Caco-2 (cell line): ENCODE measurements at regions of chr5 and their contacts with region 1.

Region 1: DNA sequence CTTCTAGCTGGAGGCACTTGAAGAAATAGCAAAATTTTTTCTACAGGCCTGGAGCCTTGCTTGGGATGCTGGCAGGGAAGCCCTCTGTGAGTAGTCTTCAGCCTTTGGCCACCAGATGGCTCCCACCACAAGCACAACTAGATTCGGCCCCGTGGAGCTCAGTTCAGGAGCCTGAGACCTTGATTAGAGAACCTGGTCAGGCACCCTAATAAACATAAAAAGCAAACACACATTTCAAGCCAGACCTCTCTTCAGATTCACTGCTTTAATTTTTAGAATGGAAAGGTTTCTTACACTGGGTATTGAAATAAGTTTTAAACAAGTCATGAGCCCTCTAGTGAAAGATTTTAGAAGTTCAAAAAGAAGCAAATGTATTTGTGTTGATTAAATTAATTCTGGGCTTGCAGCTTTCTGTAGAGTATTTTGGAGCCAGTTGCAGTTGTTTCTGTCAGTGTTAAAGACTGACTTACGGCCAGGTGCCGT is 41.4 kb downstream of the GLRX start:
- DNase-seq: peak; percentile 82 to 84
- H3K4me3 ChIP-seq: no peak overlapping the region
- H3K4me3 Mint-ChIP-seq: no peak overlapping the region
- H3K27ac Mint-ChIP-seq: no peak overlapping the region
- H3K4me1 ChIP-seq: no peaks in the 10 kb centered on the region
- H3K4me1 Mint-ChIP-seq: no peaks in the 10 kb centered on the region
- H3K27me3 ChIP-seq: no peaks in the 10 kb centered on the region
- H3K27me3 Mint-ChIP-seq: no peaks in the 10 kb centered on the region
- CTCF ChIP-seq: peak; percentile 89 to 95

Region 2: GRCh38 chr5:93874080-93874479 is 1907.1 kb before region 1 on chr5:
- CTCF ChIA-PET with region 1: no interaction called
- POLR2A ChIA-PET with region 1: no interaction called
- intact Hi-C with region 1: no loop called
- DNase-seq: no peak
- H3K4me3 ChIP-seq: no peak overlapping the region
- H3K4me3 Mint-ChIP-seq: no peak overlapping the region
- H3K27ac Mint-ChIP-seq: no peak overlapping the region
- H3K4me1 ChIP-seq: no peaks in the 10 kb centered on the region
- H3K4me1 Mint-ChIP-seq: no peaks in the 10 kb centered on the region
- H3K27me3 ChIP-seq: no peaks in the 10 kb centered on the region
- H3K27me3 Mint-ChIP-seq: no peaks in the 10 kb centered on the region
- CTCF ChIP-seq: no peak

Region 3: DNA sequence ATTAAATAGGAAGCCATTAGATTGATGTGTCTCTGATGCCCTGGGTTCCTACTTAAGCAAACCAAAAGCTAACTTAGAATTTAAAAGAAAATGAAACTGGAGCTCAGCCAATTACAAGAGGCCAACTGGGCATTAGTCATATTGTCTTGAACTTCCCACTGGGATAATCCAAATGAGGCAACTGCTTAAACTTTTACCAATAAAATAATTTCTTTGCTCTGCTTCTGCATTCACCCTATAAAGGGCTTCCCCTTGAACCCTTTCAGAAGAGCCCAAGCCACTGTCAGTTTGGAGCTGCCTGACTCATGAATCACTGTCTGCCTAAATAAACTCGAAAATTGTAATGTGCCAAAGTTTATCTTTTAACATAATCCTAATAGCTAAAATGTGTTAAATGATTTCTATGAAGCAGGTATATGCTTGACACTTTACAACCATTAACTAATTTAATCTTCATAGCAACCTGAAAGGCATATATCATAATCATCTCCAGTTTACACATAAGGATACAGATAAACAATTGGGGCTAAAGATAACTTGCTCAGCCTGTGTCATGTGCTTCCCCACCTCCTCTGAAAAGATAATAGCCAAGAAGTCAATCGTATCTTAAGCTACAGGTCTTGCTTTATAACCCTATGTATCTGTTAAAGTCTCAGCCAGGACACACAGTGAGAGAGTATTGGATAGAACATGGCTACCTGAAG is 149.7 kb before region 1 on chr5:
- CTCF ChIA-PET with region 1: no interaction called
- POLR2A ChIA-PET with region 1: no interaction called
- intact Hi-C with region 1: no loop called
- DNase-seq: no peak
- H3K4me3 ChIP-seq: no peak overlapping the region
- H3K4me3 Mint-ChIP-seq: no peak overlapping the region
- H3K27ac Mint-ChIP-seq: no peak overlapping the region
- H3K4me1 ChIP-seq: peaks cover 4% of the 10 kb centered on the region; the same call in 1 of the 2 replicates
- H3K4me1 Mint-ChIP-seq: peaks cover 11% of the 10 kb centered on the region
- H3K27me3 ChIP-seq: no peaks in the 10 kb centered on the region
- H3K27me3 Mint-ChIP-seq: no peaks in the 10 kb centered on the region
- CTCF ChIP-seq: no peak

Region 4: GRCh38 chr5:95646554-95647431 is 134.3 kb before region 1 on chr5 and contains the start of gene RFESD:
- CTCF ChIA-PET with region 1: interaction called, 22 read pairs
- POLR2A ChIA-PET with region 1: no interaction called
- intact Hi-C with region 1: loop called (anchors 1 kb)
- DNase-seq: peak; percentile 99
- H3K4me3 ChIP-seq: peak within 1 kb of the TSS; percentile 27
- H3K4me3 Mint-ChIP-seq: peak within 1 kb of the TSS; percentile 82
- H3K27ac Mint-ChIP-seq: peak within 1 kb of the TSS; percentile 89
- H3K4me1 ChIP-seq: peaks cover 8% of the 10 kb centered on the region; the same call in 1 of the 2 replicates
- H3K4me1 Mint-ChIP-seq: peaks cover 7% of the 10 kb centered on the region
- H3K27me3 ChIP-seq: no peaks in the 10 kb centered on the region
- H3K27me3 Mint-ChIP-seq: no peaks in the 10 kb centered on the region
- CTCF ChIP-seq: peak; percentile 12 to 45
- total RNA-seq, gene RFESD: 1.6 and 2.4 TPM in 2 replicates

Region 5: DNA sequence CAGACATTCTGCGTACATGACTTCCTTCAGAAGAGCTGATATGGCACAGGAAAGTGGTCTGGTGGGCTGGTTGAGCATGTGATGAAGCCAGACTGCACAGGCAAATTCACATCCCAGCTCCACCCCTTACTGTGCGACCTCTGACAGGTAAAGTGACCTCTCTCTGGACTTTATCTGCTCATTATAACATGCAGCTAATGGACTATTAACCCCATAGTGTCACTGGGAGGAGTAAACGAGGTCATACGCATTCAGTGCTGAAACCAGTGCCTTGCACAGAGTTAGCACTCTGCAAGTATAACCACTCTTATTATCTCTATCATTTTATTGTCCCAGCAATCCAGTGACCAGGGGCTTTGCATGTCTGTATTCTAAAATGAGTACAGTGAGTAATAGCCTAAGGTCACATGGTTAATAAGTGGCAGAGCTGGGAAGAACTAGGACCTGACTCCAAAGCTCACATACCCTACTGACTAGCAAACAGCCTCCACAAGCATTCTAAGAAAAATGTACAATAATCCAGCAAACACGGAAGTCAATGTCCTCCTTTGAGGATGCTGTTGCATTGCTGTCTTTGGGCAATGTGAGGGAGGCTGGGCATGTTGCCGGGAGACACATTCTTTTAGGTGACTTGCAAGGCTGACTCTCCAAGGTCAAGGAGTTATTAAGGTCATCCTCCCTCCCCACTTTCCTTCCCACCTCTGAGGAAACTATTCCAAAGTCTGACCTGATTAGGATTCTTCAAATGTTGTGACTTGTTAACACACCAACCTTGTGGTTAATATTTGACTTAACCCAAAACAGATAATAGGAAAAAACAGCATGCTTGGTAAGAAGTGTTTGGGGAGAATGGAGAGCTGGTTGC is 22.4 kb after region 1 on chr5:
- CTCF ChIA-PET with region 1: interaction called, 6 read pairs
- POLR2A ChIA-PET with region 1: no interaction called
- intact Hi-C with region 1: loop called (anchors 1 kb)
- DNase-seq: peak; percentile 72 to 86
- H3K4me3 ChIP-seq: no peak overlapping the region
- H3K4me3 Mint-ChIP-seq: peak overlapping the region; percentile 18
- H3K27ac Mint-ChIP-seq: peak overlapping the region; percentile 42
- H3K4me1 ChIP-seq: peaks cover 33% of the 10 kb centered on the region
- H3K4me1 Mint-ChIP-seq: peaks cover 20% of the 10 kb centered on the region
- H3K27me3 ChIP-seq: no peaks in the 10 kb centered on the region
- H3K27me3 Mint-ChIP-seq: no peaks in the 10 kb centered on the region
- CTCF ChIP-seq: no peak

Region 6: DNA sequence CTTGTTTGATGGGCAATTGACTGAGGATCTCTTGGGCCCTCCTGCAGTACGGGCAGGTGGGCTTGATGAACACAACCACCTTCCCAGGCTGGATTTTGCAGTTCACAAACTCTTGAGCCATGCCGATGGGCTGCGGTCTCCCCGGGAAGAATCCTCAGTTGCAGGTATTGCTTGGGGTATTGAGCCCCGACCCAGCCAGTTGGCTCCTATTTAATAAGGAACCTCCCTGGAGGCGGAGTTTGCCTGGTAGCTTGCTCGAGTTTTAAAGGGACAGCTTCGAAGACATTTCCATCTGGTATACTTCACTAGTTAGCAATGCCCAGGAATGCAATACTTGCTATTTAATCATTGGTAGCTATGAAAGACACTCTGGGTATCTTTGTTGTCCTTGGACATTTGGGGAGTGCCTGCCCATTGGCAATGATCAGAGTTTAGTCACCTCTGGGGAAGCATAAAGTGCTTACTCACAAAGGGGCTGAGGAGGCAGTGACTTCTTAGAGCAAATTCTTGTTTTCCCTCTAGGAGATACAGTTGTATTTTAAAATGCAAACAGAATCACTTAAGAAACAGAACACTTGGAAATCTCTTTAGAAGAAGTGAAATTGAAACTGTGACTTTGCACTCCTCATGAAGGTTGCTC is 41.5 kb after region 1 on chr5 and contains the start of gene GLRX:
- CTCF ChIA-PET with region 1: interaction called, 10 read pairs
- POLR2A ChIA-PET with region 1: interaction called, 3 read pairs
- intact Hi-C with region 1: loop called (anchors 1 kb)
- DNase-seq: peak; percentile 69 to 70
- H3K4me3 ChIP-seq: peak within 1 kb of the TSS; percentile 59
- H3K4me3 Mint-ChIP-seq: peak within 1 kb of the TSS; percentile 82
- H3K27ac Mint-ChIP-seq: peak within 1 kb of the TSS; percentile 63
- H3K4me1 ChIP-seq: peaks cover 34% of the 10 kb centered on the region
- H3K4me1 Mint-ChIP-seq: peaks cover 21% of the 10 kb centered on the region
- H3K27me3 ChIP-seq: no peaks in the 10 kb centered on the region
- H3K27me3 Mint-ChIP-seq: no peaks in the 10 kb centered on the region
- CTCF ChIP-seq: no peak
- total RNA-seq, gene GLRX: 17.9 and 26.4 TPM in 2 replicates

Region 7: GRCh38 chr5:95846554-95847260 is 65.6 kb after region 1 on chr5:
- CTCF ChIA-PET with region 1: interaction called, 35 read pairs
- POLR2A ChIA-PET with region 1: no interaction called
- intact Hi-C with region 1: loop called (anchors 1 kb)
- DNase-seq: peak; percentile 66 to 78
- H3K4me3 ChIP-seq: no peak overlapping the region
- H3K4me3 Mint-ChIP-seq: no peak overlapping the region
- H3K27ac Mint-ChIP-seq: no peak overlapping the region
- H3K4me1 ChIP-seq: no peaks in the 10 kb centered on the region
- H3K4me1 Mint-ChIP-seq: no peaks in the 10 kb centered on the region
- H3K27me3 ChIP-seq: no peaks in the 10 kb centered on the region
- H3K27me3 Mint-ChIP-seq: no peaks in the 10 kb centered on the region
- CTCF ChIP-seq: peak; percentile 91 to 92